AG04449 (cell line): ENCODE measurements at regions of chr1 and their contacts with region 1.

Region 1: DNA sequence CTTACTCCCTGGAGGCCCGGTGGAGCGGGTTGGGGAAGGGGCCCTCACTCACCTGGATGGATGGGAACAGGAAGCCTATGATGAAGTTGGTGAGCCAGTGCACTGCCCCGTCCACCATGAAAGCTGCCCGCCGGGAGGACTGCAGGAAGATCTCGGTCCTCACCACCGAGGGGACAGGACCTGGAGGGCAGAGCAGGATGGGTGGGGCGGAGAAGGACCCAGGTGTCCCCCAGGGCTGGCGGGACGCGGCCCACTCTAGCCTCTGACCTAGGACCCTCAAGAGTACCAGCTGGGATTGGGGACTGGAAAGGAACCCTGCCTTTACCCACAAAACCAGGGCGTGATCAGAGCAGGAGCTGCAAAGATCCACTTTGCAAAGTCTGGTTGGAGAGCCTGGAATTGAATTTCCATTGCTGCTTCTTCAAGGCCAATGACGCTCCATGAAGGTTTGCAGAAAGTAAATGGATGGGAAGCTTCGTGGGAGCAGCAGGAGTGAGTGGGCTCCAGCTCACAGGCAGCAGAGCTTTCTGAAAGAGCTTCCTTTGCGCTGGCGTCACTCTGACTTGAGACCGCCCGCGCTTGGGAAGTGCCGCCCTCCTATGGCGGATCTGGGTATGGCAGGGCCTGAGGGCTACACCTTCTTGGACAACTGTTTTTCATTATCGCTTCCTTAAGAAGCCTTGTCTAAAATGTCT is 21.4 kb downstream of the SLC2A7 start:
- DNase-seq: peak; percentile 29
- H3K4me3 ChIP-seq: no peak overlapping the region
- CTCF ChIP-seq: peak; percentile 97

Region 2: GRCh38 chr1:8910914-8911313 is 93.9 kb before region 1 on chr1:
- CTCF ChIA-PET with region 1: interaction called, 189 read pairs
- POLR2A ChIA-PET with region 1: no interaction called
- DNase-seq: no peak
- H3K4me3 ChIP-seq: no peak overlapping the region
- CTCF ChIP-seq: no peak

Region 3: GRCh38 chr1:8951231-8951630 is 53.6 kb before region 1 on chr1:
- CTCF ChIA-PET with region 1: interaction called, 10 read pairs
- POLR2A ChIA-PET with region 1: no interaction called
- DNase-seq: no peak
- H3K4me3 ChIP-seq: no peak overlapping the region
- CTCF ChIP-seq: no peak

Region 4: GRCh38 chr1:8992936-8993687 is 11.7 kb before region 1 on chr1:
- CTCF ChIA-PET with region 1: interaction called, 121 read pairs
- POLR2A ChIA-PET with region 1: no interaction called
- DNase-seq: no peak
- H3K4me3 ChIP-seq: no peak overlapping the region
- CTCF ChIP-seq: no peak

Region 5: DNA sequence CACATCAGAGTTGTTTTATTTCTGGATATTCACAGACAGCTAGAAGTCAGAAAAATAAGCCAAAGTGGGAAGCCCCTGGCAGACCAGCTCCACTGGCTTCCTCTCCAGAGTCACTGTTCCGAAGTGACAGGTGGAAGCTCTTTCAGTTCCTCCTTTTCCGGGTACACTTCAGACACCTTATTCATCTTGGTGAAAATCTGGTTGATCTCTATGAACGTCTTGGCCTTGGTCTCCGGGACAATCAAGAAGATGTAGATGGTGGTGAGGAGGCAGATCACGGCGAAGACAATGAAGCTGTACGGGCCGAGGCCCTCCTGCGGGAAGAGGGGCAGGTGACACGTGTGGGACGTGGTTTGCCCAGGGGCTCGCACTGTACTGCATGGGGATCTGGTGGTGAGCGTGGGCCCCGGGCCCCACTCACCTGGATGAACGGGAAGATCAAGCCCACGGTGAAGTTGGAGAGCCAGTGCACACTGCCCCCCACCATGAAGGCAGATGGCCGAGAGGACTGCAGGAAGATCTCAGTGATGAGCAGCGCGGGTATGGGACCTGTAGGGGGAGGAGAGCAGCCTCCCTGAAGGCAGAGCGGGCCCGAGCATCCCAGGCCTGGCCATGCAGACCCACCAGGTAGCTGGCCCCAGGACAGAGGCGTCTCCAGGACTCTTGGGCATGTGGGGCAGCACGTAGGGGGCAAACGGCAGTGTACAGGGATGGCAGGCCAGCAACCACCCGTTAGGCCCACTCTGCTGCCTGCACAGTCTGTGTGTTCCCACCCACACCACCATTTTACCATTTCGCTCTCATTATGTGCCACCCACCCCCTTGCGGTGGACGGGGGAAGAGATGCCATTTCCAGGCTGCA is 32.9 kb after region 1 on chr1:
- CTCF ChIA-PET with region 1: interaction called, 25 read pairs
- POLR2A ChIA-PET with region 1: no interaction called
- DNase-seq: no peak
- H3K4me3 ChIP-seq: no peak overlapping the region
- CTCF ChIP-seq: no peak